Adrenal gland (tissue), 19 donors: ENCODE measurements at regions of chr16 and their contacts with region 1.

Region 1: GRCh38 chr16:1309888-1310831 is 724 bp downstream of the UBE2I start:
- DNase-seq: peak; percentile 68 to 80 (median 75)
- H3K4me3 ChIP-seq: peak overlapping the region in 3 of 4 donors; percentile 43 to 92 (median 67)
- H3K27ac ChIP-seq: peak overlapping the region; percentile 64 to 100 (median 93)
- H3K4me1 ChIP-seq: peaks cover 28 to 32% of the 10 kb centered on the region in 2 donors
- H3K27me3 ChIP-seq: no peaks in the 10 kb centered on the region
- CTCF ChIP-seq: no peak
- POLR2A ChIP-seq: peak in 1 of 2 donors; percentile 30

Region 2: DNA sequence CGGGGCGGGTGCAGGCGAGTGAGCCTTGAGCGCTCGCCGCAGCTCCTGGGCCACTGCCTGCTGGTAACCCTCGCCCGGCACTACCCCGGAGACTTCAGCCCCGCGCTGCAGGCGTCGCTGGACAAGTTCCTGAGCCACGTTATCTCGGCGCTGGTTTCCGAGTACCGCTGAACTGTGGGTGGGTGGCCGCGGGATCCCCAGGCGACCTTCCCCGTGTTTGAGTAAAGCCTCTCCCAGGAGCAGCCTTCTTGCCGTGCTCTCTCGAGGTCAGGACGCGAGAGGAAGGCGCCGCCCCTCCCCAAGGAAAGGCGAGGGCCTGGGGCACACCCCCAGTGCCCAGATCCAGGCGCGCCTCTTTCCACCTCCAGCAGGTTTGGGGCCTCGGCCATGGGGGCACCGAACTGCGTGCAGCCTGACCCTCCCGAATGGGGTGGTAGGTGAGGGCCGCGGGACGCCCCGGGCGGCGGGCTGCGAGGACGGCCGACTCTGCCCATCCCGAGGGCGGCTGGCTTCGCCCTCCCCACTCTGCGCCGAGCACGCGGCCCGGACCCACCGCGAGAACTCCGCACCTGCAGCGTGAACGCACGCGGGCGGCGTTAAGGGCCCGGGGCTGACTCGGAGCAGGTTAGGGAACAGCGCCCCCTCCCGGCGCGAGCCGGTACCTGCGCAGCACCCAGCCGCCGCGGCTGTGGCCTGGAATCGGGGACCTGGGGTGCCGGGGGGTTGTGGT is 1129.1 kb before region 1 on chr16:
- intact Hi-C with region 1: no loop called
- DNase-seq: peak; percentile 62 to 85 (median 78)
- H3K4me3 ChIP-seq: peak overlapping the region in 1 of 4 donors; percentile 33
- H3K27ac ChIP-seq: no peak overlapping the region
- H3K4me1 ChIP-seq: peaks cover 5 to 17% of the 10 kb centered on the region in 2 donors
- H3K27me3 ChIP-seq: peaks cover 41% of the 10 kb centered on the region
- CTCF ChIP-seq: peak; percentile 81 to 96 (median 90)
- POLR2A ChIP-seq: peak in 1 of 2 donors; percentile 7

Region 3: DNA sequence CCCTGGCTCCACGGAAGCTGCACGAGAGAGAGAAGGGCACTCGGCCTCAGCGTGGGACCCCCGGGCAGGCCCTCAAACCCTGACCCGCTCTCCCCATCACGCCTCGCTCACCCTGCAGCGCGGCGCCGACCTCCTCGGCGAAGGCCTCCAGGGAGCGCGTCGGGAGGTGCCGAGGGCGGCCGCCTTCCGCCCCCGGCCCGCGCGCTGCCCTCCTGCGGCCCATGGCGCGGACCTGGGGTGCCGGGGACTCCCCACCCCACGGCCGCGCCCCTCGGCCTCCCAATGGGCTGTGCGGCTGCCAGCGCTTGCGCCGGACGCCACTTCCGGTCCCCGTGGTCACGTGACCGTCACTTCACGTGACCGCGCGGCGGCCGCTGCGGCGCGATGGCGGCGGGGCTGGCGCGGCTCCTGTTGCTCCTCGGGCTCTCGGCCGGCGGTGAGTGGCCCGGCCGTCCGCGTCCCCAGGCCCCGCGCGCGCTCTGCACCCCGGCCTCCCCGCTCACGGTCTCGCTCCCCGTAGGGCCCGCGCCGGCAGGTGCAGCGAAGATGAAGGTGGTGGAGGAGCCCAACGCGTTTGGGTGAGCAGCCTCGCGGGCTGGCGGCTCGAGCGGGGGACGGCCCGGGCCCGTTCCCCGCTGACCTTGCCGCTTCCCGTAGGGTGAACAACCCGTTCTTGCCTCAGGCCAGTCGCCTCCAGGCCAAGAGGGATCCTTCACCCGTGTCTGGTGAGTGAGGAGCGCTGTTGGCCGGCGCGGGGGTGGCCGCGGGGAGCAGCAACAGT is 41.6 kb after region 1 on chr16 and contains the starts of genes GNPTG and TSR3:
- intact Hi-C with region 1: loop called in 1 of 2 experiments (anchors 5 kb)
- DNase-seq: peak; percentile 80 to 89 (median 85)
- H3K4me3 ChIP-seq: peak within 1 kb of the TSS; percentile 42 to 90 (median 66)
- H3K27ac ChIP-seq: peak within 1 kb of the TSS in 4 of 5 donors; percentile 1 to 85 (median 68)
- H3K4me1 ChIP-seq: peaks cover 30 to 48% of the 10 kb centered on the region in 2 donors
- H3K27me3 ChIP-seq: no peaks in the 10 kb centered on the region
- CTCF ChIP-seq: no peak
- POLR2A ChIP-seq: peak; percentile 73 to 83
- total RNA-seq, gene GNPTG: 132 to 332 (median 281) TPM
- total RNA-seq, gene TSR3: 49.8 to 258 (median 75.0) TPM

Region 4: DNA sequence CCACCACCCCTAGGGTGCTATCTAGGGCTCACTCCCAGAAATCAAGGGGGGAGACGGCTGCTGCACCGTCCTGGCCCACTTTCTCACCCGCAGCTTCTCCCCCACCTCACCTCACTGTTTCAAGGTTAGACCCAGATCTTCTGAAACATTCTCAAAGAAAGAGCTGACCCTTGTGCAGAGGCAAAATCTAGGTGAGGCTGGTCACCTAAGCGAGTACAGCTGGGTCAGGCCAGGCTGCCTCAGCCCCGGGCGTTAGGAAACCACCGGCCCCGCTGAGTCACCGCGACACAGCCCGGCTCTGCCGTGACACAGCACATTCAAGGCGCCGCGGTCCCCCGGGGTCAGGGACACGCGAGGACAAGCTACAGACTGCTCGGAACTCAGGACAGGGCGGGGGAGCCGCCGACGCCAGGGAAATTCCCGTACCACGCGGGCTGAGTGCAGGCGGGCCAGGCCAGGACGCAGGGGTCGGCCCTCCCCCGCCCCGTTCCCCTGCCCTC is 68.7 kb after region 1 on chr16:
- intact Hi-C with region 1: no loop called
- DNase-seq: peak; percentile 94 to 99 (median 98)
- H3K4me3 ChIP-seq: peak overlapping the region in 2 of 4 donors; percentile 24 to 56
- H3K27ac ChIP-seq: peak overlapping the region; percentile 89 to 98 (median 97)
- H3K4me1 ChIP-seq: peaks cover 12 to 22% of the 10 kb centered on the region in 2 donors
- H3K27me3 ChIP-seq: no peaks in the 10 kb centered on the region
- CTCF ChIP-seq: no peak
- POLR2A ChIP-seq: peak in 1 of 2 donors; percentile 53

Region 5: GRCh38 chr16:1408171-1408837 is 98.1 kb after region 1 on chr16:
- intact Hi-C with region 1: loop called (anchors 10 kb)
- DNase-seq: peak; percentile 92 to 97 (median 95)
- H3K4me3 ChIP-seq: peak overlapping the region in 1 of 4 donors; percentile 47
- H3K27ac ChIP-seq: peak overlapping the region in 2 of 5 donors; percentile 38 to 47
- H3K4me1 ChIP-seq: peaks cover 3 to 11% of the 10 kb centered on the region in 2 donors
- H3K27me3 ChIP-seq: no peaks in the 10 kb centered on the region
- CTCF ChIP-seq: no peak
- POLR2A ChIP-seq: no peak

Region 6: GRCh38 chr16:1413684-1414531 is 103.7 kb after region 1 on chr16:
- intact Hi-C with region 1: loop called (anchors 10 kb)
- DNase-seq: peak; percentile 43 to 73 (median 57)
- H3K4me3 ChIP-seq: peak overlapping the region; percentile 45 to 98 (median 74)
- H3K27ac ChIP-seq: peak overlapping the region in 4 of 5 donors; percentile 66 to 93 (median 70)
- H3K4me1 ChIP-seq: peaks cover 5 to 8% of the 10 kb centered on the region in 2 donors
- H3K27me3 ChIP-seq: no peaks in the 10 kb centered on the region
- CTCF ChIP-seq: peak; percentile 33 to 67 (median 56)
- POLR2A ChIP-seq: no peak